Caco-2 (cell line): ENCODE measurements at regions of chr2 and their contacts with region 1.

Region 1: DNA sequence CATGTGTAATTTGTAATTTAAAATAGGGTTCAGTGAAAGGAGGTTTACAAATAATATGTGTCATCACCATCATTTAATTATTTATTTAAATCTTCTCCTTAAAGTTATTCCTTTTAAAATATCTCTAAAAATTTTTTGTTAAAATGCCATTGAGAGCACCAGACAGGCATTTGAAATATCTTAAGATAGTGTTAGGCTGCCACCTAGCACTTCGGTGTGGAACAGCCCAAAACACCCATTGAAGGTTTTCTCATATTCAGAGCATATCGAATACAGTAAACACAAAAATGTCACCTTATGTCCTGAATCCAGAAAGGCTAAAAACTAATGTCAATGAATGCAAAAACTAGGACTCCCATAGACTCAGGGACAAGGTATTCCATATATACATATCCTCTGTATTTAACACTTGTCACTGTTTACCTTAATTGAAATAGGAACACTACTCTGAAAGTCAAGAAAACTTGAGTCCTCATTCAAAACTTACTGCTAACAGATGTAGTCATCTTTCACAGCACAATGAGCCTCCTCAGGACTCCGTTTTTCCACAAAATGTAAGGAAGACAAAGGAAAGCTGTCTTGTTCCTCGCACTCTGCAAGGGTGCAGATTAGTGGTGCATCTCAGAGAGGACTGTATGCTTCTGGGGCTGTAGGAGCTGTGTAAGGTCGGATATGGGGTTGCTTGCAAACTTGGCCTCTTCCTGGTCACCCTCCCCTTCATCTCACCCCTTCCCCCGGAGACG is 329.5 kb downstream of the PAX3 start:
- DNase-seq: peak in 1 of 2 experiments; percentile 67
- H3K4me3 ChIP-seq: no peak overlapping the region
- H3K4me3 Mint-ChIP-seq: no peak overlapping the region
- H3K27ac Mint-ChIP-seq: no peak overlapping the region
- H3K4me1 ChIP-seq: no peaks in the 10 kb centered on the region
- H3K4me1 Mint-ChIP-seq: no peaks in the 10 kb centered on the region
- H3K27me3 ChIP-seq: no peaks in the 10 kb centered on the region
- H3K27me3 Mint-ChIP-seq: no peaks in the 10 kb centered on the region
- CTCF ChIP-seq: peak; percentile 84 to 87

Region 2: GRCh38 chr2:221423210-221423786 is 546.0 kb before region 1 on chr2:
- CTCF ChIA-PET with region 1: no interaction called
- POLR2A ChIA-PET with region 1: no interaction called
- intact Hi-C with region 1: loop called (anchors 2 kb)
- DNase-seq: no peak
- H3K4me3 ChIP-seq: no peak overlapping the region
- H3K4me3 Mint-ChIP-seq: no peak overlapping the region
- H3K27ac Mint-ChIP-seq: no peak overlapping the region
- H3K4me1 ChIP-seq: no peaks in the 10 kb centered on the region
- H3K4me1 Mint-ChIP-seq: no peaks in the 10 kb centered on the region
- H3K27me3 ChIP-seq: no peaks in the 10 kb centered on the region
- H3K27me3 Mint-ChIP-seq: no peaks in the 10 kb centered on the region
- CTCF ChIP-seq: no peak

Region 3: GRCh38 chr2:221517696-221518151 is 451.5 kb before region 1 on chr2:
- CTCF ChIA-PET with region 1: no interaction called
- POLR2A ChIA-PET with region 1: no interaction called
- intact Hi-C with region 1: loop called (anchors 5 kb)
- DNase-seq: no peak
- H3K4me3 ChIP-seq: no peak overlapping the region
- H3K4me3 Mint-ChIP-seq: no peak overlapping the region
- H3K27ac Mint-ChIP-seq: no peak overlapping the region
- H3K4me1 ChIP-seq: peaks cover 43% of the 10 kb centered on the region
- H3K4me1 Mint-ChIP-seq: peaks cover 8% of the 10 kb centered on the region
- H3K27me3 ChIP-seq: no peaks in the 10 kb centered on the region
- H3K27me3 Mint-ChIP-seq: no peaks in the 10 kb centered on the region
- CTCF ChIP-seq: no peak

Region 4: GRCh38 chr2:221635949-221636348 is 333.3 kb before region 1 on chr2:
- CTCF ChIA-PET with region 1: no interaction called
- POLR2A ChIA-PET with region 1: no interaction called
- intact Hi-C with region 1: loop called (anchors 5 kb)
- DNase-seq: peak in 1 of 2 experiments; percentile 31
- H3K4me3 ChIP-seq: no peak overlapping the region
- H3K4me3 Mint-ChIP-seq: no peak overlapping the region
- H3K27ac Mint-ChIP-seq: no peak overlapping the region
- H3K4me1 ChIP-seq: no peaks in the 10 kb centered on the region
- H3K4me1 Mint-ChIP-seq: no peaks in the 10 kb centered on the region
- H3K27me3 ChIP-seq: no peaks in the 10 kb centered on the region
- H3K27me3 Mint-ChIP-seq: no peaks in the 10 kb centered on the region
- CTCF ChIP-seq: peak; percentile 28 to 38